SK-N-SH (cell line): ENCODE measurements at regions of chr13 and their contacts with region 1.

Region 1: DNA sequence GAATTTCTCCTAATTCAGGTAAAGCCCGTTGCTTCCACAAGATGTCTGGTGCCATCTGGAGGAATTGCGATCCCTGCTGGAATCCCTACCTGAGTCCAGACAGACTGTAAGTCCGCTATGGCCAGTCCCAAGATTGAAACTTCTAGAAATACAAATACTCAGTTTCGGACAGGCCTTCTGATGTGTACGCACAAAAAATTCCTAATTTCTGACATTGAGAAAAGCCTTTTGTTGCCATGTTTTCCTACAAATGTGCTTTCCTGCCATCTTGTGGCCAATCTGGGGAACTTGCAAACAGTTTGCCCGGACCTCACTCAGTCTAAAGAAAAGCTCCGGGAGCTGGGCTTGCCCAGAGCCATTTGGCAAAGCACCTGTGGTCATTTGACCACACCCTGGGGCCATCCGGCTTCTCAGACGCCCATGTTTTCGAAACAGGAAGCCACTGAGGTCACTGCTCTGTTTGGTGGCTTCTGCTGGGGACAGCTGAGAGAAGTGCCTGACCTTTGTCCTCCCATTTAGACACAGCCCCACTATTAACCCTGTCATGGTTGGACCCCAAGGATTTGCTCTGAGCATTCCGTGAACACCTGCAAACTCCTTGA is 79.4 kb downstream of the SLC15A1 start:
- DNase-seq: peak; percentile 77
- H3K4me3 ChIP-seq: peak overlapping the region in 1 of 2 experiments; percentile 22; a peak in 1 of 4 replicates
- H3K27ac ChIP-seq: no peak overlapping the region
- H3K4me1 ChIP-seq: peaks cover 0 to 8% of the 10 kb centered on the region in 2 experiments; a peak in 1 of 4 replicates
- H3K27me3 ChIP-seq: no peaks in the 10 kb centered on the region; the same call in 1 of the 2 replicates
- CTCF ChIP-seq: peak; percentile 89
- EP300 ChIP-seq: no peak
- RAD21 ChIP-seq: peak; percentile 85

Region 2: GRCh38 chr13:98454389-98454881 is 218.6 kb before region 1 on chr13:
- CTCF ChIA-PET with region 1: interaction called, 24 read pairs
- POLR2A ChIA-PET with region 1: no interaction called
- DNase-seq: no peak
- H3K4me3 ChIP-seq: no peak overlapping the region
- H3K27ac ChIP-seq: peak overlapping the region; percentile 39 to 68
- H3K4me1 ChIP-seq: peaks cover 8 to 17% of the 10 kb centered on the region in 2 experiments; a peak in 2 of 4 replicates
- H3K27me3 ChIP-seq: no peaks in the 10 kb centered on the region
- CTCF ChIP-seq: no peak
- EP300 ChIP-seq: no peak
- RAD21 ChIP-seq: no peak

Region 3: GRCh38 chr13:98613591-98613990 is 59.5 kb before region 1 on chr13:
- CTCF ChIA-PET with region 1: no interaction called
- POLR2A ChIA-PET with region 1: no interaction called
- DNase-seq: no peak
- H3K4me3 ChIP-seq: no peak overlapping the region
- H3K27ac ChIP-seq: no peak overlapping the region
- H3K4me1 ChIP-seq: no peaks in the 10 kb centered on the region
- H3K27me3 ChIP-seq: no peaks in the 10 kb centered on the region
- CTCF ChIP-seq: no peak
- EP300 ChIP-seq: no peak
- RAD21 ChIP-seq: no peak

Region 4: GRCh38 chr13:98685146-98685545 is 12.1 kb after region 1 on chr13:
- CTCF ChIA-PET with region 1: interaction called, 17 read pairs
- POLR2A ChIA-PET with region 1: no interaction called
- DNase-seq: no peak
- H3K4me3 ChIP-seq: no peak overlapping the region
- H3K27ac ChIP-seq: no peak overlapping the region
- H3K4me1 ChIP-seq: peaks cover 0 to 3% of the 10 kb centered on the region in 2 experiments; a peak in 1 of 4 replicates
- H3K27me3 ChIP-seq: no peaks in the 10 kb centered on the region; the same call in 1 of the 2 replicates
- CTCF ChIP-seq: no peak
- EP300 ChIP-seq: no peak
- RAD21 ChIP-seq: peak; percentile 31; the same call in 1 of the 2 replicates

Region 5: GRCh38 chr13:98842864-98843481 is 169.9 kb after region 1 on chr13:
- CTCF ChIA-PET with region 1: interaction called, 11 read pairs
- POLR2A ChIA-PET with region 1: no interaction called
- DNase-seq: peak; percentile 72
- H3K4me3 ChIP-seq: no peak overlapping the region; a peak in 1 of 4 replicates
- H3K27ac ChIP-seq: no peak overlapping the region
- H3K4me1 ChIP-seq: peaks cover 6 to 7% of the 10 kb centered on the region in 2 experiments; a peak in 2 of 4 replicates
- H3K27me3 ChIP-seq: no peaks in the 10 kb centered on the region
- CTCF ChIP-seq: peak; percentile 91
- EP300 ChIP-seq: no peak
- RAD21 ChIP-seq: peak; percentile 97

Region 6: DNA sequence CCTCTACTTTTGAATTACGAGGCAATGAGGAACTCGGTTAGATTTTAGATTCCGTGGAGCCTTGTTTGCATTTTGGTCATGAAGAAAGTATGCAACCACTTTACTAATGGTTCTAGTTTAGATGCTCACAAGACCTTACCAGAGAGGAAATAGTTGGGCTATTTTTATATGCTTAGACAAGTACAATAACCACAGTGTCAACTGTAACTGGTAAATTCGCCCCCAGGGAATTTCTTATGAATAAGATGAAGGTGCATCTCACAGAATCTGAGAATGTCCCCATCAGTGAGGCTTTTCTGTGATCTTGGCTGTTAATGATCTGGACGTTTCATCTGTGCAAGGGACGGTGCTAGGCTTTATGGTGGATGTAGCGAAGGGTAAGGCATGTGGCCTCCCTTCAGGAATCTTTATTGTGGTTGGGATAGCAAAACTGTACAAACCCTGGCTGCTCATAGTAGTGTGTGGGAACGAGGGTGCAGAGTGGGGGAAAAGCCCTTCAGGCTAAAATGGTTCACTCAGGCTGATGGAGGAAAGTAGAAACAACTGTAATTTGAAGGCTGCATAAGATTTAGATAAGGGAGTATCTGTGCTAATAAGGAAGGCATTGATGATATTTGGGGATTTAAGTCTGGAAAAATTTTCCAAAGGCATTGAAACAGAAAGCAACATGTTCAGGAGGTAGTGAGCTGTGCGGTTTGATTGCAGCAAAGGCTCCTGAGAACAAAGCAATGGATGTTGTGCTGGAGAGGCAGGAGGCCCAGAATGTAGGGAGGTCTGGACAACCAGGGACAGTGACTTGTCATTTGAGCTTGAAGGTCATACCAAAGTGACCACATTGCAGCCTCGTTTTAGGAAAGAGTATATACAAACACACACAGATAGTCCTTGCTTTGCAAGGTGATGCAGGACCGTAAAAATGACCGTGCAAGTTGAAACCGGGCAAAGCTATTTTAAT is 556.0 kb after region 1 on chr13:
- CTCF ChIA-PET with region 1: no interaction called
- POLR2A ChIA-PET with region 1: no interaction called
- DNase-seq: peak; percentile 41
- H3K4me3 ChIP-seq: peak overlapping the region in 1 of 2 experiments; percentile 34; a peak in 1 of 4 replicates
- H3K27ac ChIP-seq: peak overlapping the region; percentile 60 to 71
- H3K4me1 ChIP-seq: peaks cover 8 to 12% of the 10 kb centered on the region in 2 experiments; a peak in 3 of 4 replicates
- H3K27me3 ChIP-seq: no peaks in the 10 kb centered on the region
- CTCF ChIP-seq: no peak
- EP300 ChIP-seq: no peak
- RAD21 ChIP-seq: no peak